HEK293T (cell line): ENCODE measurements at regions of chr9 and their contacts with region 1.

Region 1: GRCh38 chr9:136483589-136484152 is 831 bp upstream of the SEC16A start:
- DNase-seq: peak; percentile 95

Region 2: GRCh38 chr9:135456436-135457104 is 1027.1 kb before region 1 on chr9:
- CTCF ChIA-PET with region 1: no interaction called
- POLR2A ChIA-PET with region 1: no interaction called
- DNase-seq: no peak

Region 3: DNA sequence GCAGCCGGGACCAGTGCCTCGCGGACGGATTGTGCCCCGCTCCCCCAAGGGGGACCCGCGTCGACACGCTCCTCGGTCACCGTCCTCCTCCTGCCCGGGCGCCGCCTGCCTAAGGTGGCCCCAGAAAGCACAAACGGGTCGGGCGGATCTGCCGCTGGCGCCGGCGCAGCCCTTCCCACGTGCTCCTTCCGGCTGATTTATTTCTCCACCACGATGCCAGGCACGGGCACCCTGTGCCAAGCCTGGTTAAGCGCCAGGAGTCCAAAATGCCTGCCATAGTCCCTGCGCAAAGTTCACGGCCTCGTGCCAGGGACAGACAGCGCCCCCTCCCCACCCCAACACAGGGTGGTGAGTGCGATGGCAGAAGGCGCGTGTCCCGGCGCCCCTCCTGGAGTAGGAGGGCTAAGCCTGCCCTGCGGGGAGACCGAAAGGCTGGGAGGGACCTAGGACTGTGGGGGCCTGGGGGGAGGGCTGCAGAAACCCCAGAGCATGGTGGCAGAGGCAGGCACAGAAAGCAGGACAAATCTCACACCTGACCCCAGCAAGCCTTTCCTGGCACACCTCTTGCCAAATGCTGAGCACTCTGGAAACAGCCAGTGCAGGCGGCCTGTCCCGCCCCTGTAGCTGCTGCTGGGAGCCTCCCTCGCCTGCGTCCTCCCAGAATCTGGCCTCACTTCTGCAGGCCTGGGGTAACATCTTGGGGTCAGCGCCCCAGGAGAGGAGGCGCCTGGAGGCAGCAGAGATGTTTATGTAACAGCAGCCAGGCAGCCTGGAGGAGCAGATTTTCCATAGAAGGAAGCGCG is 63.2 kb after region 1 on chr9:
- CTCF ChIA-PET with region 1: no interaction called
- POLR2A ChIA-PET with region 1: no interaction called
- DNase-seq: no peak

Region 4: GRCh38 chr9:136625101-136626060 is 141.7 kb after region 1 on chr9:
- CTCF ChIA-PET with region 1: interaction called, 13 read pairs
- POLR2A ChIA-PET with region 1: interaction called, 3 read pairs
- DNase-seq: no peak

Region 5: GRCh38 chr9:136631038-136632000 is 147.6 kb after region 1 on chr9:
- CTCF ChIA-PET with region 1: interaction called, 13 read pairs
- POLR2A ChIA-PET with region 1: interaction called, 4 read pairs
- DNase-seq: peak; percentile 74